ENCODE measurements at regions of chr7 and their contacts with region 1.

Region 1: GRCh38 chr7:45136106-45137060 is 21.2 kb upstream of the RAMP3 start:
- DNase-seq: peak; percentile 46
- H3K4me3 ChIP-seq: no peak overlapping the region
- H3K27ac ChIP-seq: no peak overlapping the region
- H3K27me3 ChIP-seq: peaks cover 9% of the 10 kb centered on the region
- CTCF ChIP-seq: peak; percentile 90

Region 2: DNA sequence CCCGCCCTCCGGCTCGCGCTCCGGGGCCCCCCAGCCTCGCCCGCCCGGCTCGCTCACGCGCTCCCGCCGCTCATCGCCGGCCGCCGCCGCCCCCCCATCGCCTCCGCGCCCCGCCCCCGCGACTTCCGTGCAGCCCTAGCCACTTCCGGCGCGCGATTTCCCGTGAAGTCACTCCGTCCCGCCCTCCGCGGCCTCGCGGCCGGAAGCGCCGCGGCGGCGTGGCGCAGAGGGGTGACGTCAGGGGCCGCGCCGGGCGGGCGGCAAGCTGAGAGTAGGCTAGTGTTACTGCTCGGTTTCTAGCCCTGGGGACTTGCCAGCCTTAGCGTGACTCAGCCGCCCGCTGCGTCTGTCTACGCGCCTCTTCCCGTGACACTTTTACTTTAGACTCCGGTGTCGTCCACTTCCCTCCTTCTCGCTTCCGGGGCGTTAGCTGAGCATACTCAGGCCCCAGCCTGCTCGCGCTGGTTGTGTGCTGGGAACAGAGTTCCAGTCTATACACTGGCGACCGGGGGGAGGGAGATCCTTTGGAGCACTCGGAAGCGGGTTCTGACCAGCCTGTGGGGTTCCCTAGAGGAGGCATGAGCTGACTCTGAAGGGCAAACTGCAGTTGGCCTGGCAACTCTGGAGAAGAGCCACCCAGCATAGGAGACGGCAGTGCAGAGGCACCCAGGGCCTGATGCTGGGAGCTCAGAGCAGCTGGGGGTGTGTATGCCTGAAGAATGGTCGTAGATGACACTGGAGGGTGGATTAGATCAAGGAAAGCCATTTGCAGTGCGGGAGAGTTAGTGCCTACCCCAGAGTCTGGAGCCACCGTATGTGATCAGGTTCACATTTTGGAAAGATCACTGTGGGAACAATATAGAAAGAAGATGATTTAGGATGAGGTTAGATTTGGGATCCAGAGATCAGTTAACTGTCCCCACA is 250.7 kb before region 1 on chr7 and contains the start of gene PURB:
- CTCF ChIA-PET with region 1: interaction called, 15 read pairs
- POLR2A ChIA-PET with region 1: no interaction called
- DNase-seq: peak; percentile 92
- H3K4me3 ChIP-seq: peak within 1 kb of the TSS; percentile 94
- H3K27ac ChIP-seq: peak within 1 kb of the TSS; percentile 99
- H3K27me3 ChIP-seq: no peaks in the 10 kb centered on the region
- CTCF ChIP-seq: no peak
- polyA plus RNA-seq, gene PURB: 7.6 TPM in 2 replicates

Region 3: DNA sequence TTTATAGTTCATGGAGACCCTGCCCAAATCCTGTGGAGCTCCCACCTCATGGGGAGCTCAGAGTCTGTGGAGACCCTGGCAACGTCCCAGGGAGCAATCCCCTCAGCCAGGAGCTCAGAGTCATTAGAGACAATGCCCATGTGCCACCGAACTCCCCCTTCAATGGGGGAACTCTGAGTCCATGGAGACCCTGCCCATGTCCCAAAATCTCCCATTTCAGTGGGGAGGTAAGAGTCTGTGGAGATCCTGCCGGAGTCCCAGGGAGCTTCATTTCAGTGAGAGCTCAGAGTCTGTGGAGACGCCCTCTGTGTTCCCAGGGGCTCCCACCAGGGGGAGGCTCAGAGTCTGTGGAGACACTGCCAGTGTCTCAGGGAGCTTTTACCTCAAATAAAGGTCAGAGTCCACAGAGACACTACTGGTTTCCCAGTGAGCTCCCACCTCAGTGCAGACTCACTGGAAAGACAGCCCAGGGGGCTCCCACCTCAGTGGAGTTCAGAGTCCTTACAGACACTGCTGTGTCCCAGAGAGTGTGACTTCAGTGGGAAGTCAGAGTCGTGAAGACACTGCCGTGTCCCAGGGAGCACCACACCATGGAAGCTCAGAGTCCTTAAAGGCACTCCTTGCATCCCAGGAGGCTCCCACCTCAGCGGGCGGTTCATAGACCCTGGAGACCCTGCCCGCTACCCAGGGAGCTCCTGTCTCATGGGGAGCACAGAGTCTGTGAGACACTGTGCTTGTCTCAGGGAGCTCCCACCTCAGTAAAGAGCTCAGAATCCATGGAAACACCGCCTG is 162.6 kb before region 1 on chr7:
- CTCF ChIA-PET with region 1: interaction called, 56 read pairs
- POLR2A ChIA-PET with region 1: no interaction called
- DNase-seq: no peak
- H3K4me3 ChIP-seq: no peak overlapping the region
- H3K27ac ChIP-seq: no peak overlapping the region
- H3K27me3 ChIP-seq: peaks cover 6% of the 10 kb centered on the region
- CTCF ChIP-seq: peak; percentile 41

Region 4: DNA sequence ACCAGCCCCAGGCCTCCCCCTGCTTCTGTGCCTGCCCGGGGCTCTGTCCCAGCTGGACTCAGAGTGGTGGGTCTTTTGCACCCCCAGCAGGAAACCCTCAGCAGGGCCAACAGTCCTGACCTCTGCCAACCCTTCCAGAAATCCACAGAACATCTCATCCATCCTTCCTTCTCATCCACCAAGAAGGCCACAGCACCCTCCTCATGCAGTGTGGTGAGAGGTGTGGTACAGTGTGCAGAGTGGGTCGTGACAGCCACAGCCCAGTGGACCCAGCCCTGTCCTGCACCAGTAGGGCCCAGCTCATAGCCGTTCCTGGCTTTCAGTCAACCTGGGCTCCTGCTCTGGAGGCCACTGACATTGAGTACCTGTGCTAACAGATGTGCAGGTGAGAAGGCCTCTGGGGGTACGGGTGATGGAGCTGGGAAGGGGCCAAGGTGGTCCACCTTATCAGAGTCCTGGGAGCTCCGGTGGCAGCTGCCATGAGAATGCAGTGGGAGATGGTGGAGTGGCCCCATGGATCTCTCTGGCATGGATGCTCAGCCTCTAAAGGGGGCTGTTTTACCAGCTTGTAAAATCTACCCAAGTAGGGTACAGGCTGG is 18.9 kb before region 1 on chr7:
- CTCF ChIA-PET with region 1: interaction called, 16 read pairs
- POLR2A ChIA-PET with region 1: no interaction called
- DNase-seq: no peak
- H3K4me3 ChIP-seq: no peak overlapping the region
- H3K27ac ChIP-seq: no peak overlapping the region
- H3K27me3 ChIP-seq: peaks cover 36% of the 10 kb centered on the region
- CTCF ChIP-seq: no peak

Region 5: GRCh38 chr7:45306752-45307305 is 170.4 kb after region 1 on chr7:
- CTCF ChIA-PET with region 1: no interaction called
- POLR2A ChIA-PET with region 1: no interaction called
- DNase-seq: no peak
- H3K4me3 ChIP-seq: no peak overlapping the region
- H3K27ac ChIP-seq: no peak overlapping the region
- H3K27me3 ChIP-seq: no peaks in the 10 kb centered on the region
- CTCF ChIP-seq: no peak